Activated CD8-positive, alpha-beta memory T cell treated with anti-CD3 and anti-CD28 coated beads, Interleukin-2, amount 10 ng/mL, durations not matched to agents 7 days and 5 days (primary cell): ENCODE measurements at regions of chr12 and their contacts with region 1.

Region 1: DNA sequence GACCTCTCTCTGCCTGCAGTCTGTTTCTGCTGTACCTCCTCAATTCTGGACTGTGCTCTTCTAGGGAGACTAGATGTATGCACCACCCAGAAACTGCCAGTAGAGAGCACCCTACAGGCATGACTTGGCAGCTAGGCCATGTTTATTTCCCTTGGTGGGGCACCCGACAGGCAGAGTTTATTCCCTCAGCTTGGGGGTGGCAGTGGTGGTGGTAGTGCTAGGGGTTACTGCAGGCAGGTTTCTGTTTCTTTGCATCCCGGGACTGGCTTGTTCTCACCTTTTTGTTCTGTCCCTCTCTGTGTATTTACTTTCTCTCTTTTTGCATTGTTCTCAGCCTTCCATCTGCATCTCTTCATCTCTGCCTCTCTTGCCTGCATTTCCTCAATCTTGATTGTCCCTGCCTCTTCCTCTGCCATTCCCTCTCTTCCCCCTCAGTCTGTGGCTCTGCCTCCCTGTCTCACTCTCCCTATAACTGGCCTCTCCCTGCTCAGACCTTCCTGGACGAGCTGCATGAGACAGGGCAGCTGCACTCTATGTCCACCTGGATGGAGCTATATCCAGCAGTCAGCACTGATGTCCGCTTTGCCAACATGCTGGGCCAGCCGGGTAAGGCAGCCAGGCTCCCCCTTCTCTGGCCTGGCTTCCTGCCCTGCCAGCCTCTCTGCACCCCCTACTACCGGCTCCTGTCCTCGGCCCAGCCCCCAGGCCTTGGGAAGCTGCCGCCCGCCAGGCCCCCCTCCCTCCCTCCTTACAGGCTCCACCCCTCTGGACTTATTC is 13.8 kb downstream of the PRPF40B start:
- DNase-seq: peak; percentile 79
- ATAC-seq: peak; percentile 91
- H3K4me3 Mint-ChIP-seq: no peak overlapping the region
- H3K27ac Mint-ChIP-seq: no peak overlapping the region
- H3K4me1 Mint-ChIP-seq: peaks cover 19% of the 10 kb centered on the region
- H3K27me3 Mint-ChIP-seq: no peaks in the 10 kb centered on the region

Region 2: DNA sequence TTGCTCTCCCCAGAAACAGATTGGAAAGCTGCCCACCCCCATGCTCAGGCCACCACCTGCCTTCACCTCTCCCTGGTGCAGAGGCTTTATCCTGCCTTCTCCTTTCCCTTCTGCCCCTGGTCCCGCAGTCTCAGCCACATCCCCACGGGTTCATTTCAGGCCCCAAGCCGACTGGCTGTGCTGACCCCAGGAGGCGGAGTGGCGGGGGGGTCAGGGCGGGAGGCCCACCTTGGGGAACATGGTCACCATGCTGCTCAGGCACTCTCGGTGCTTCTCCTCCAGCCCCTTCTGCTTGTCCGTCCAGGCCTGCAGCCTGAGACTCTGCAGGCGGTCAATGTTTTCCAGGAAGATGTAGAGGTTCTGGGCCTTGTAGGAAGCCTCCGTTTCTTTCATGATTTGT is 38.6 kb before region 1 on chr12:
- CTCF ChIA-PET with region 1: no interaction called
- DNase-seq: no peak
- ATAC-seq: no peak
- H3K4me3 Mint-ChIP-seq: no peak overlapping the region
- H3K27ac Mint-ChIP-seq: no peak overlapping the region
- H3K4me1 Mint-ChIP-seq: no peaks in the 10 kb centered on the region
- H3K27me3 Mint-ChIP-seq: no peaks in the 10 kb centered on the region

Region 3: GRCh38 chr12:49623142-49623904 is 13.8 kb before region 1 on chr12 and contains the start of gene PRPF40B:
- CTCF ChIA-PET with region 1: interaction called, 24 read pairs
- DNase-seq: peak; percentile 88
- ATAC-seq: peak; percentile 89
- H3K4me3 Mint-ChIP-seq: peak within 1 kb of the TSS; percentile 76
- H3K27ac Mint-ChIP-seq: peak within 1 kb of the TSS; percentile 85
- H3K4me1 Mint-ChIP-seq: peaks cover 22% of the 10 kb centered on the region
- H3K27me3 Mint-ChIP-seq: peaks cover 37% of the 10 kb centered on the region
- total RNA-seq, gene PRPF40B: 7.8 to 15.2 TPM

Region 4: DNA sequence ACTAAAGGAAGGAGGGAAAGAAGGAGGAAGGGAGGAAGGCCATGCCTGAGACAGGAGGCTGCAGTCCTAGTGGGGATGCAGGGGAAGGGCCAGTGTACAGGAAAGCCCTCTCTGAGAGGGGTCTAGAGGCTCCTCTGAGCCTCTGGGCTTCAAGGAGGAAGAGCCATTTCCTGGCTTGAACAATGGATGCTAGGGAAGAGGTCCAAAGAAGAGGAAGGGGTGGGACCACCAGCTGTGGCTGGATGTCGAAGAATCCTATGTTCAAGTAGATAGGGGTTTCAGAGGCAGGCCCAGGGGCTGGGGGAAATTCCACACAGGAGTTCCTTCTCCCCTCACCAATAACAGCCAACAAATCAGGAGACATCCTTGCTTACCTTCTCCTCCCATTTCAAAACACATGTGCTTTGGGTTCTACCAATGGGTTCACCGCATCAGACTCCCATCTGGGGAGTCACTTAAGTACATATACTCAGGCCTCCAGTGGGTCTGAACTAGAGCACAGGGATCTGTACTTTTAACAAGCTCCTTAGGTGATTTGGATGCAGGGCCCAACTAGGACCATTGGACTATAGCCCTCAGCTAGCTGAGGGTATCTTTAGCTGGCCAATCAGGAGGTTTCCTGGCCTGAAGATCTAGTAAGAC is 18.5 kb after region 1 on chr12:
- CTCF ChIA-PET with region 1: interaction called, 14 read pairs
- DNase-seq: no peak
- ATAC-seq: no peak
- H3K4me3 Mint-ChIP-seq: no peak overlapping the region
- H3K27ac Mint-ChIP-seq: no peak overlapping the region
- H3K4me1 Mint-ChIP-seq: peaks cover 8% of the 10 kb centered on the region
- H3K27me3 Mint-ChIP-seq: no peaks in the 10 kb centered on the region

Region 5: DNA sequence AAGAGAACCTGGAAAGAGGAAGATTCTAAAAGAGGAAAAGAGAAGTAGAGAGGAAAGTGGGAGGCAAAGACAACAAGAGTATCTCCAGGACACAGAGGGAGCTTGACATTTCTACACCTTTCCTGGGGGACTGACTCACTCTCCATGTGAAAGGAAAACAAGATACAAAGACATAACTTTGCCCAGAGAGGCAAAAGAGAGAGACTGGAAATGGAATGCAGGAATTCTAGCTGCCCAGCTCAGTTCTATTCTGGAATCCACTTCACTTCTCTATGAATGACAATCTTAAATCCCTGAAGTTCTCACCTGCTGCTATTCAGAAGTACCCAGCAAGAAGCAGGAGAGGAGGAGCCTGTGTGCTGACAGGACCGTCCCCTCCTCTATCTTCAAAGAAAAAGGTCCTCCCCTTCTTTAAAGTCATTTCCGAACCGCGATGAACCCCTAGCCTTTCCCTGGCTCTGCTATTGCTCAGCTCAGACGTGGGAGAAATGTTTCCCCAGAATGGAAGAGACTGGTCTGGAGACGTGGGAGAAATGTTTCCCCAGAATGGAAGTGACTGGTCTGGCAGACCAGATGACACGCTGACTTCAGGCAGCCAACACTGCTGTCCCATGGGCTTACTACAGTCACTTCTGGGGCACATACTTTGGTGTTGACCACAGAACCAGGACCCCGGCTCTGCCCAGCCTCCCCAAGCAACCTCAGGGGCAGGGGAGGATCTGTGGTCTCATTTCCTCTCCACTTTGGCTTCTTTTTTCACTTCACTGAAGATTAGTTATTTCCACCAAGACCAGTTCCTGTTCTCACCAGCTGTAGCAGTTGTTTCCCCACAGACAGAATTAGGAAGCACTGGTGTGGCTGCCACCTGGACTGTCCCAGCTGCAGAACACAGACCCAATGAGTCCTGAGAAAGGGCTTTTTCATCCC is 61.7 kb after region 1 on chr12:
- CTCF ChIA-PET with region 1: interaction called, 185 read pairs
- DNase-seq: peak; percentile 79
- ATAC-seq: peak; percentile 81
- H3K4me3 Mint-ChIP-seq: peak overlapping the region; percentile 66
- H3K27ac Mint-ChIP-seq: peak overlapping the region; percentile 92
- H3K4me1 Mint-ChIP-seq: peaks cover 41% of the 10 kb centered on the region
- H3K27me3 Mint-ChIP-seq: no peaks in the 10 kb centered on the region